Right lobe of liver (tissue), 6 donors: ENCODE measurements at regions of chr21 and their contacts with region 1.

Region 1: GRCh38 chr21:45129189-45129923 is 55.0 kb downstream of the ADARB1 start:
- DNase-seq: no peak
- ATAC-seq: peak in 1 of 4 donors; percentile 5
- H3K4me3 ChIP-seq: no peak overlapping the region
- H3K27ac ChIP-seq: peak overlapping the region in 2 of 3 donors; percentile 25 to 50
- H3K4me1 ChIP-seq: no peaks in the 10 kb centered on the region
- H3K27me3 ChIP-seq: no peaks in the 10 kb centered on the region
- CTCF ChIP-seq: no peak
- POLR2A ChIP-seq: no peak

Region 2: GRCh38 chr21:44949779-44950198 is 179.6 kb before region 1 on chr21:
- intact Hi-C with region 1: loop called (anchors 5 kb)
- DNase-seq: peak; percentile 89 to 93 (median 90)
- ATAC-seq: peak; percentile 76 to 86 (median 77)
- H3K4me3 ChIP-seq: no peak overlapping the region
- H3K27ac ChIP-seq: no peak overlapping the region
- H3K4me1 ChIP-seq: peaks cover 0 to 18% (median 5%) of the 10 kb centered on the region in 4 donors
- H3K27me3 ChIP-seq: no peaks in the 10 kb centered on the region
- CTCF ChIP-seq: peak; percentile 88 to 94 (median 92)
- POLR2A ChIP-seq: no peak